ENCODE measurements at regions of chr11 and their contacts with region 1.

Region 1: GRCh38 chr11:66022401-66023185 is 3.7 kb downstream of the CATSPER1 start:
- DNase-seq: peak; percentile 57 to 71 (median 68)
- H3K4me3 ChIP-seq: peak overlapping the region in 3 of 7 experiments; percentile 19 to 56 (median 53)
- H3K27ac ChIP-seq: no peak overlapping the region
- H3K4me1 ChIP-seq: peaks cover 0 to 26% (median 23%) of the 10 kb centered on the region in 4 experiments
- H3K27me3 ChIP-seq: peaks cover 0 to 7% (median 0%) of the 10 kb centered on the region in 5 experiments

Region 2: GRCh38 chr11:65961232-65961901 is 61.2 kb before region 1 on chr11 and contains the start of gene SART1:
- CTCF ChIA-PET with region 1: no interaction called
- POLR2A ChIA-PET with region 1: no interaction called
- DNase-seq: peak; percentile 98 to 99 (median 98)
- H3K4me3 ChIP-seq: peak within 1 kb of the TSS; percentile 67 to 96 (median 90)
- H3K27ac ChIP-seq: peak within 1 kb of the TSS; percentile 92 to 95
- H3K4me1 ChIP-seq: peaks cover 12 to 29% (median 22%) of the 10 kb centered on the region in 4 experiments
- H3K27me3 ChIP-seq: no peaks in the 10 kb centered on the region

Region 3: DNA sequence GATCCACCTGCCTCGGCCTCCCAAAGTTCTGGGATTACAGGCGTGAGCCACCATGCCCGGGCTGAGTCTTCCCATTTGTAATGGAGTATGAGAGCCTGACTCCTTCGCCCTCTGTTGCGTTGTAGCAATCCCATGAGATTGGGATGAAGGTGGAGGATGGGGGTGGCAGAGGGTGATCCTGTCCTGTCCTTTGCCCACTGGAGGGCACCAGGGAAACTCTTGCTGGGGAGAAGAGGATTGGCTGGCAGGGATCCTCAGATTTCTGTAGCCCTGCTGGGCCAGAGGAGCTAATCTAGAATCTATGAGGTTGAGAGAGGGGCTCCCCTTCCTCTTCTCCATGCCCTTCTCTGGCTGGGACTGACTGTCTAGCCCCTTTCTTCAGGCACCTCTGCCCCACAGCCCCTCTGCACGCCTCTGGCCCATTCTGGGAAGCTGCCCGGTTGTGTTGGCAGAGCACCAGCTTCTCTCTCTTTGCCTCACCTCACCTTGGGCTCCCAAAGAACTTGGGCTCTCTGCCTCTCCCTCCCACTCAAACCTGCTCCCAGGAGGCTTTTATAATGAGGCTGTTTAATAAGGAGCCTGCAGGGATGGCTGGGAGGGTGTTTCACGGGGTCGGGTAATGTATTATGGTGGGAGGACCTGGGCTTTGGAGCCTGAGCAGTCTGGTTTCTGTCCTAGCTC is 13.2 kb after region 1 on chr11:
- CTCF ChIA-PET with region 1: interaction called, 18 read pairs
- POLR2A ChIA-PET with region 1: no interaction called
- DNase-seq: no peak
- H3K4me3 ChIP-seq: no peak overlapping the region
- H3K27ac ChIP-seq: no peak overlapping the region
- H3K4me1 ChIP-seq: no peaks in the 10 kb centered on the region
- H3K27me3 ChIP-seq: peaks cover 0 to 4% (median 0%) of the 10 kb centered on the region in 5 experiments

Region 4: DNA sequence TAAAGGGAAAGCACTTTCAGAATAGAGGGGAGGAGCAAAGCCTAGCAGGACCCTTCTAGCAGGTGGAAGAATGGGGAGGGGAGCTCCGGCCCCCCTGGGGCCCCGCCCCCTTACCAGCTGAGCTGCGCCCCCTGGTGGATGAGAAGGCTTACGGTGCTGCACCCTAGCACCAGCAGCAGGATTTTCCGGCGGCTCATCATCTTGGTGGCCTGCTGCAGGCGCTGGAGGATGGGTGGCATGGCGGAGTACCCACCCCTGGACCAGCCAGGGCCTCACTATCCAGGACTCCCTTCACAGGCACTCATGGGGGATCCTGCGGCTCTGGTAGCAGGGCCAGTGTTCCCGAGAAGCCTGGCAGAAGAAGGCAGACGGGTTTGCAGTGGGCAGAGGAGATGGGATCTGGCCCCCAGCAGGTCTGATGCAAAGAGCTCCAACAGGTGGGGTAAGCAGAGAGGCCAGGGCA is 22.6 kb after region 1 on chr11:
- CTCF ChIA-PET with region 1: interaction called, 21 read pairs
- POLR2A ChIA-PET with region 1: interaction called, 3 read pairs
- DNase-seq: peak; percentile 84 to 91 (median 89)
- H3K4me3 ChIP-seq: peak overlapping the region in 4 of 7 experiments; percentile 9 to 39 (median 24)
- H3K27ac ChIP-seq: no peak overlapping the region
- H3K4me1 ChIP-seq: peaks cover 0 to 17% (median 9%) of the 10 kb centered on the region in 4 experiments
- H3K27me3 ChIP-seq: peaks cover 0 to 5% (median 0%) of the 10 kb centered on the region in 5 experiments